OCI-LY7 (cell line): ENCODE measurements at regions of chr1 and their contacts with region 1.

Region 1: DNA sequence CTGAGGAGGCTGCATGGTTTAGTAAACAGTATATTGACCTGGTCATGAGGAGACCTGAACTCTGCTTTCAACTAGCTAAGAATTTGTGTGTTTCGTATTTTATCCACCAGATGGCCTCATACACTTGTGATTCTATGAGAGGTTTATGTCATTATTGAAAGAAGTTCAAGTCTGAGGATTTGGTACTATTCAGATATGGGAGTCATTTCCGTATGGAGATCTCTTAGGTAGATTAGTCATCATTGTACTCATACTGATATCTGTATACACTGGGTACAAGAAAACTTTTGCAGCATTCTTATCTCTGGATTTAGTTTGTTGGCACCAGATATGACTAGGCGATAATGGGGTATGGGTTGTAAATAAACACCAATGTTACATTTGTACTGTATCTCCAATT is 26.6 kb downstream of the ATF6 start:
- DNase-seq: peak; percentile 55
- H3K4me3 ChIP-seq: no peak overlapping the region
- H3K27ac ChIP-seq: no peak overlapping the region
- H3K4me1 ChIP-seq: no peaks in the 10 kb centered on the region
- CTCF ChIP-seq: peak; percentile 83

Region 2: GRCh38 chr1:161843156-161843555 is 50.4 kb after region 1 on chr1:
- CTCF ChIA-PET with region 1: no interaction called
- POLR2A ChIA-PET with region 1: no interaction called
- intact Hi-C with region 1: no loop called
- DNase-seq: no peak
- H3K4me3 ChIP-seq: no peak overlapping the region
- H3K27ac ChIP-seq: no peak overlapping the region
- H3K4me1 ChIP-seq: no peaks in the 10 kb centered on the region
- CTCF ChIP-seq: no peak

Region 3: DNA sequence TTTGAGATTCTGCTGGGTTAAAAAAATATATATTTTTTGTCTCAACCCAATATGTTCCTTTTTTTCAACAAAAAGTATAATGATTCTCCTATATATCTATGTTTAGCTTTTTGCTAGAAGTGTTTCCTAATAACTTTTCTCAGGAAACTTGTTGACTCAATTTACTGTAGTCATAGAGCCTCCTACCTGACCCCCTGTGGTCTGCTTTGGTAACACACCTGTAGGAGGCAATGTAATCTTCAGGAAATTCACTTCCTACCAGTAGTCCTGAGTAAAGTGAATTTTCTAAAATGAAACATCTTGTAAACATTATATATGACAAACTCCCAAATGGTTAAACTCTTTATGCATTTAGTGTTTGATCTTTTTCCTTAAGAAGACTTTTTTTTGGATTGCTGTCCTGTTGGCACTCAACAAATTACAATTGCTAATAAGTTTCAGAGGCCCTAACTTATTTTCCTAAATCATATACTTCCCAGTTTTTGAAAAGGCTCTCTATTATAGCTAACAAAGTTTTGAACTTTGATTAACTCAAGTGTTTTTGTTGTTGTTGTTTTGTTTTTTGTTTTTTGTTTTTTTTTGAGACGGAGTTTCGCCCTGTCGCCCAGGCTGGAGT is 112.6 kb after region 1 on chr1:
- CTCF ChIA-PET with region 1: no interaction called
- POLR2A ChIA-PET with region 1: no interaction called
- intact Hi-C with region 1: loop called (anchors 5 kb)
- DNase-seq: peak; percentile 41
- H3K4me3 ChIP-seq: no peak overlapping the region
- H3K27ac ChIP-seq: no peak overlapping the region
- H3K4me1 ChIP-seq: no peaks in the 10 kb centered on the region
- CTCF ChIP-seq: peak; percentile 87

Region 4: DNA sequence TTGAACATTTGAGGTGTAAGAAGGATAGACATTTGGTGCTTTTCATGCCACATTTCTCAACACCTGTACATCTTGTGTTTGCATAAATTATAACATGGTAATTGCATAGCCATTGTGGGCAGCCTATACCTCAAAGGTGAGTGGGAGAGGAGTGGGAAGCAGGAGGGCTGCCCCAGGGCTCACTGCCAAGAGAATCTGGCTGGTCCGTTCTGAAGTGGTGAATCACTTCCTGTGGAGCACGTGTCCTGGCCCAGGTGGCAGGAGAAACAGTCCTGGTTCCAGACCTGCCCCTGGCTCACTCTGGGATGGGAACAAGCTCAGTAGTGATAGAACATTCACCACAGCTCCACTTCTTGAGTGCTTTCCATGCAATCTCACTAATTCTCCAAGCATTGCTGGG is 242.5 kb after region 1 on chr1:
- CTCF ChIA-PET with region 1: interaction called, 3 read pairs
- POLR2A ChIA-PET with region 1: no interaction called
- intact Hi-C with region 1: loop called (anchors 5 kb)
- DNase-seq: no peak
- H3K4me3 ChIP-seq: no peak overlapping the region
- H3K27ac ChIP-seq: no peak overlapping the region
- H3K4me1 ChIP-seq: no peaks in the 10 kb centered on the region
- CTCF ChIP-seq: no peak